Caco-2 (cell line): ENCODE measurements at regions of chr14 and their contacts with region 1.

Region 1: GRCh38 chr14:36028218-36028617 is 148.3 kb downstream of the PTCSC3 start:
- DNase-seq: peak in 1 of 2 experiments; percentile 17
- H3K4me3 ChIP-seq: no peak overlapping the region
- H3K4me3 Mint-ChIP-seq: no peak overlapping the region
- H3K27ac Mint-ChIP-seq: no peak overlapping the region
- H3K4me1 ChIP-seq: no peaks in the 10 kb centered on the region
- H3K4me1 Mint-ChIP-seq: no peaks in the 10 kb centered on the region
- H3K27me3 ChIP-seq: no peaks in the 10 kb centered on the region; the same call in 1 of the 2 replicates
- H3K27me3 Mint-ChIP-seq: peaks cover 19% of the 10 kb centered on the region
- CTCF ChIP-seq: no peak

Region 2: DNA sequence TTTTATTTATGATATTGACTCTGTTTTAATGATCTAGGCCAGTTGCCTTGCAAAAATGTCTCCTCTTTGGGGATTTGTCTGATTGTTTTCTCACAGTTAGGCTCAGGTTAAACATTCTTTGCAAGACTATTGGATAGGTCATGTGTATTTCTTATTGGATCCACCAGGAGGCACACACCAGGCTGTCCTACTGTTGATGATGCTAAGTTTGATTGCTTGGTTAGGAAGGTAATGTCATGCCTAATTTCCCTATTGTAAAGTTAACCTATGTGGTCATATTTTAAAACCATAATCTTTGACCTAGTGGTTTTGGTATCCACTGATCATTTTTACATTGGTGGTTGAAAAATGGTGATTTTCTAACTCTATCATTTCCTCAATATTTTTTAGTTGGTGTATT is 65.0 kb before region 1 on chr14:
- CTCF ChIA-PET with region 1: no interaction called
- POLR2A ChIA-PET with region 1: no interaction called
- intact Hi-C with region 1: loop called (anchors 5 kb)
- DNase-seq: no peak
- H3K4me3 ChIP-seq: no peak overlapping the region
- H3K4me3 Mint-ChIP-seq: no peak overlapping the region
- H3K27ac Mint-ChIP-seq: no peak overlapping the region
- H3K4me1 ChIP-seq: peaks cover 36% of the 10 kb centered on the region
- H3K4me1 Mint-ChIP-seq: peaks cover 18% of the 10 kb centered on the region
- H3K27me3 ChIP-seq: no peaks in the 10 kb centered on the region
- H3K27me3 Mint-ChIP-seq: no peaks in the 10 kb centered on the region
- CTCF ChIP-seq: no peak